Posterior vena cava (tissue), 2 donors: ENCODE measurements at regions of chr3 and their contacts with region 1.

Region 1: GRCh38 chr3:156674046-156674910 is at the start of gene TIPARP:
- DNase-seq: peak; percentile 100
- total RNA-seq, gene TIPARP: 26.5 to 30.2 TPM

Region 2: GRCh38 chr3:156554842-156555687 is 119.2 kb before region 1 on chr3 and contains the start of gene SSR3:
- intact Hi-C with region 1: loop called in 1 of 2 experiments (anchors 10 kb)
- DNase-seq: peak; percentile 100
- total RNA-seq, gene SSR3: 150 to 171 TPM

Region 3: DNA sequence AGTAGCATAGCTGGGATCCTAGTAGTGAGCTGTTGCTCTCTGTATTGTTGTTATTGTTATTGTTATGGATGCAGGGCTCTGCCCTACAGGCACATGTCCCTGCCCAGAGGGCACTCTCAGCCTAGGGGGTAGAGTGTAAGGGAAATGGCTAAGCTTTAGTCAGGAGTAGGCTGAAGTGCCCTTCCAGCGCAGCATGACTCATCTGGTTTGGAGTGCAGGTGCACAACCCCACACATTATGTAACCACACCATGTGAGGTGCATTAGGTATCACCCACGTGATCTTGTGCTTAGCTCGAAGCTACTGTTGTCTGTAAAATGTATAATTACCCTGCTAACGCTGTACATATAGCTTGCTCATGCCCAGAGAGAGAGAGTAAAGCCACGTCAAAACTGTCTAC is 48.2 kb before region 1 on chr3:
- intact Hi-C with region 1: no loop called
- DNase-seq: no peak

Region 4: GRCh38 chr3:156826144-156826895 is 152.0 kb after region 1 on chr3 and contains the start of gene LEKR1:
- intact Hi-C with region 1: loop called in 1 of 2 experiments (anchors 10 kb)
- DNase-seq: peak; percentile 96
- total RNA-seq, gene LEKR1: 1.4 to 1.6 TPM

Region 5: GRCh38 chr3:157081681-157082210 is 407.5 kb after region 1 on chr3:
- intact Hi-C with region 1: loop called (anchors 10 kb)
- DNase-seq: peak; percentile 97

Region 6: DNA sequence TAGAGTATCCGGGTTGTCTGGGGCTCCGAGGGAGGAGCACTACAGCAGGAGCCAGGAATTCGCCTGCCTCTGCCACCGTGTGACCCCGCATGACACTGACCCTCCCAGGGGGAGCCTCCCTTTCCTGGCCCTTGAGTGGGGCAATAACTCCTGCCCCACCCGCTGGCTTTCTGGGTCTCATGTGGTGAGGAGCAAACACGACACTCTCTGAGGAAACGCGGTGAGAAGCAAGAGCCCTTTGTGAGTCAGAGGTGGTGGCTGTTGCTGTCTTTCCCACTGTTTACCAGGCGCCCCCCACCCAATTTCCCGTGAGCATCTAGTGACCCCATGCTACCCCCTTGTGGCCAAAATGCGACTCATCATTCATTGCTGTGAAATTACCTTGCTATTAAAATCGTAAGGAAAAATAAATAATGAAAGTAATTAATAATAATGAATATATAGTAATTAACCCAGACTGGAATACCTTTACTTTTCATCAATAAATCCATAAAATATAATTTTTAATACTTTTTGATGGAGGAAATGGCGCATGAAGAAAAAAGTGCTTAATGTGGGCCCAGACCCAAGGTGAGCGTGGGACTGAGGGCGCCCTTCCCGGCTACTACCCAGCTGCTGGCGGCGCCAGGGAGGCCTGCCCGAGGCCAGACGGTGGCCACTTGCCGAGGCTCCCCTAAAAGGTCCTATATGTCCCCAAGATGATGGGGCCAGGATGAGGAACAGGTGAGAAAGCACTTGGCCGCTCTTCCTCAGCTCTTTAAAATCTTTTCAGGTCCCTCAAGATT is 456.4 kb after region 1 on chr3:
- intact Hi-C with region 1: loop called (anchors 5 to 10 kb)
- DNase-seq: no peak

Region 7: DNA sequence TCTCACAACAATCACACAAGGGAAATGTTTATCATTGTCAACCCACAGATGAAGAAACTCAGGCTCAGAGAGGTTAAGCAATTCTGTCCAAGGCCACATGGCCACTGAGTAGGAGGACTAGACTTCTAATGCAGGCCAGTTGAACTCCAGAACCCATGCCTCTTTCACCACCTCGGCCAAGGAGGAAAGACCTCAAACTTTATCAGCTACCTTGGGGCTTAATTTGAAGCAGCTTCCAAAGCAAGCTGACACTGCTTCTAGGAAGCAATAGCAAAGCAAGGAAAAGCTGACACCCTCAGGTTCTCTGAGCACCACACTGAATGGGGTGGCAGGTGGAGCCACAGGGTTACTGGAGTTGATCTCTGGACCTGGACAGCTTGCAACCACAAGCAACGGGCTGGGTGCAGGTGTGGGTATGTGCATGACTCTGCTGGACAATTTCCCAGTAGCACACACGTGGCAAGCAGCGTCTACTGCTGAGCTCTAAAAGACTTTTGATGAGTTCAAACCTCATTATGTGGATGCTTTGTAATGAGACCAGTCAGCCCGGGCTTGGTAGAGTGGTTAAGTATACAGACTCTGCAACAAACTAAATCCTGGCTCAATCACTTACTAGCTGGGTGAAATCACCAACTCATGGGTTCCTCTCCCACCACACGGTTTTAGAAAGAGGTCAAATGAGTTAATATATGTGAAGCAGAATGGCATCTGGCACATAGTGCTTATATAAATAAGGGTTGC is 462.5 kb after region 1 on chr3:
- intact Hi-C with region 1: loop called (anchors 5 to 10 kb)
- DNase-seq: no peak